Calu3 (cell line): ENCODE measurements at regions of chrX and their contacts with region 1.

Region 1: GRCh38 chrX:49761481-49761880 is 65.7 kb upstream of the PAGE1 start:
- DNase-seq: peak; percentile 6
- H3K4me3 Mint-ChIP-seq: no peak overlapping the region
- H3K27ac Mint-ChIP-seq: no peak overlapping the region
- H3K4me1 Mint-ChIP-seq: peaks cover 8% of the 10 kb centered on the region
- H3K27me3 Mint-ChIP-seq: peaks cover 47% of the 10 kb centered on the region
- CTCF ChIP-seq: no peak

Region 2: GRCh38 chrX:48606091-48606490 is 1155.4 kb before region 1 on chrX:
- CTCF ChIA-PET with region 1: no interaction called
- intact Hi-C with region 1: no loop called
- DNase-seq: no peak
- H3K4me3 Mint-ChIP-seq: no peak overlapping the region
- H3K27ac Mint-ChIP-seq: no peak overlapping the region
- H3K4me1 Mint-ChIP-seq: no peaks in the 10 kb centered on the region
- H3K27me3 Mint-ChIP-seq: no peaks in the 10 kb centered on the region
- CTCF ChIP-seq: no peak

Region 3: DNA sequence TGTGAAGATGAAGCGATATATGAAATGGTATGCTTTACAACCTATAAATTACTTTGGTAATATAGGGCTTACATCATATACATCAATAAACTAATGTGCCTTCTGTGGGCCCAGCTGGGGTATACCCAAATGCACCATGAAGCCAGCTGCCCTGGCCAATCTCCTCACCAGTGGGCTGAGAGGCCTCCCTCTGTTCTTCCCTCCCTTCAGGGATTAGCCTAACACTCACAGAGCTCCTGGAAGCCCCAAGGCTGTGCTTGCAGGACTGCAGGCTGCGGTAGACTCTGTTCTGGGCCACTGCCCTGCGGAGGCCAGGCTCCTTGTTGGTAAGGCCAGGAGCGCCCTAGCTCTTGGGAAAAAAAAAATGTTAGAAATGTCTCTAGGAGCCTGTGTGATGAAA is 99.6 kb before region 1 on chrX:
- CTCF ChIA-PET with region 1: no interaction called
- intact Hi-C with region 1: no loop called
- DNase-seq: no peak
- H3K4me3 Mint-ChIP-seq: no peak overlapping the region
- H3K27ac Mint-ChIP-seq: no peak overlapping the region
- H3K4me1 Mint-ChIP-seq: no peaks in the 10 kb centered on the region
- H3K27me3 Mint-ChIP-seq: peaks cover 34% of the 10 kb centered on the region
- CTCF ChIP-seq: no peak

Region 4: DNA sequence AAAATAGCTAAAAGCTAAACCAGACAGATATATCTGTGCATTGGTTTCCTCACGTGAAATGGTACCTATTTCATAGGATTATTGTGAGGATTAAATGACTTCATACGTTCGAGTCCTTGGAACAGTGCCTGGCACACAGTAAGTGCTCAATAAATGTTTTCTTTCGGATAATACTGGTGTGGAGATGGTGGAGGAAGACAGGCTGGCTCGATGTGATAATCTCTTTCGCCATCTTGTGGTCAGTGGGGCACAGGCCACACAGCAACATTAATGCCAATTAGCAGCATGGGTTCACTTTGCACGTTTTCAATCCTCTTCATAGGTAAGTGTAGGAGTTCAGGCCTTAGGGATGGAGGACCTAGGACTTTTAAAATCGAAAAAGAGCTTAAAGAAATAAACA is 76.9 kb after region 1 on chrX:
- CTCF ChIA-PET with region 1: no interaction called
- intact Hi-C with region 1: loop called (anchors 5 kb)
- DNase-seq: peak; percentile 30
- H3K4me3 Mint-ChIP-seq: no peak overlapping the region
- H3K27ac Mint-ChIP-seq: no peak overlapping the region
- H3K4me1 Mint-ChIP-seq: no peaks in the 10 kb centered on the region
- H3K27me3 Mint-ChIP-seq: peaks cover 33% of the 10 kb centered on the region
- CTCF ChIP-seq: peak; percentile 18

Region 5: DNA sequence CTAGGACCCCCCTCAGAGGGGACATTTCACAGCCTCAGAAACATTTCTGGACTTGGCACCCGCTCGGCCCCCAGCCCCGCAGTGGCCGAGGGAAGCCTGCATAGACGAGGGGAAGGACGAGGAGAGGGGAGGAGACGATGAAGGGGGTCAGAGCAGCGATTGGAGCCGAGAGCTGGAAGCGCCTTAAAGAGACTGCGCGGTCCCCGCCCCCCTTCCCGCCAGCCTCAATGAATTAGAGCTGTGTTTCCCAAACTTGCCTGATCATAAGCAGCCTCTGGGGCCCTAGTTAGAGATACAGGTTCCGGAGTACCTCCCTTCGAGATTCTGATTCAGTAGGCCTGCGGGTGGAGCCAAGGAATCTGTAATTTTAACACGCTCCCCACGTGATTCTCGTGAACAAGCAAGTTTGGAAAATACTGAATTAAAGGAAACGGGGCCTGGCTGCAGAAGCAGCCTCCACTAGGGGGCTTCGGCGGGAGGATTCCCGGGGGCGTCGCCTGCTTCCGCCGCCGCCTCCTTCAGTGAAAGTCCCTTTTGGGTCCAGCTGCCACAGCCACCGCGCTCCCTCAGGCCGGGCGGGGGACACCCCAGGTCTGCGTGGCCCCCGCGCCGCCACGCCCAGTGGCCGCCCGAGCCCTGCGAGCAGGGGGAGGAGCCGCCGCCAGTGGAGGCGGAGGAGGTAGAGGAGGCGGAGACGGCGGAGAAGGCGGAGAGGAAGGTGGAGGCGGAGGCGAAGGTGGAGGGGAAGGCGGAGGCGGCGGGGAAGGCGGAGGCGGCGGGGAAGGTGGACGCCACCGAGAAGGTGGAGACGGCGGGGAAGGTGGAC is 117.6 kb after region 1 on chrX and contains the start of gene USP27X:
- CTCF ChIA-PET with region 1: no interaction called
- intact Hi-C with region 1: loop called (anchors 2 kb)
- DNase-seq: peak; percentile 85
- H3K4me3 Mint-ChIP-seq: peak within 1 kb of the TSS; percentile 68
- H3K27ac Mint-ChIP-seq: peak within 1 kb of the TSS; percentile 27
- H3K4me1 Mint-ChIP-seq: peaks cover 3% of the 10 kb centered on the region
- H3K27me3 Mint-ChIP-seq: no peaks in the 10 kb centered on the region
- CTCF ChIP-seq: peak; percentile 69
- total RNA-seq, gene USP27X: 3.1 and 4.2 TPM in 2 replicates

Region 6: GRCh38 chrX:49977319-49978090 is 216.0 kb after region 1 on chrX:
- CTCF ChIA-PET with region 1: no interaction called
- intact Hi-C with region 1: no loop called
- DNase-seq: no peak
- H3K4me3 Mint-ChIP-seq: no peak overlapping the region
- H3K27ac Mint-ChIP-seq: no peak overlapping the region
- H3K4me1 Mint-ChIP-seq: no peaks in the 10 kb centered on the region
- H3K27me3 Mint-ChIP-seq: no peaks in the 10 kb centered on the region
- CTCF ChIP-seq: no peak